ENCODE measurements at regions of chr5 and their contacts with region 1.

Region 1: DNA sequence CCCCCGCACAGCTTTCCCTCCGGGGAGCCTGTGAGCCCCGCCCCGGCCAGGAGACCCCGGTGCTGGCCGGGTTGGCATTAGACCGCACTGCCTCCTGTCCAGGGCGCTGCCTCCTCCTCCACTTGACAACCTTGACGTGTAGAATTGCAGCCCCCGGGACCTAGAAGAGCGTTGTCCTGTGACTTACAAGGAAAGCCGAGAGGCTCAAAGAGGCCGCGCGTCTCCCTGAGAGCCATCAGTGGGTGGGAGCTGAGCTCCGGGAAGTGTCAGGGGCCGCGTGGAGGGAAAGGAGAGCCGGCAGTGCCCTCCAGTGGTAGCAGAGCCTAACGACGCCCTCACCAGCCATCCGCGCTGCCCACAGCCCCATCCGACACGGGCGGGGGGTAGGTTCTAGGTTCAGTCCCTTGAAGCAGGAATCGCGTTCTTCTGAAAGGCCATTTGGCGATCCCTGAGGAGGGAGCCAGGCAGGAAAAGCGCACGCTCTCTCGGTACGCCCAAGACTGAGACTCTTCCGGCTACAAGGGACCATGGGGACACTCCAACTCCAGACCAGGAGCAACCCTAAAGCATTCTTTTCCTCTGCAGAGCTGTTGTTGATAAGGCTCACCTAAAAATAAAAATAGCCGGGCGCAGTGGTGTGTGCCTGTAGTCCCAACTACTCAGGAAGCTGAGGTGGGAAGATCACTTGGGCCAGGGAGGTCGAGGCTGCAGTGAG is 40.6 kb upstream of the SAP30L start:
- DNase-seq: no peak
- H3K4me3 ChIP-seq: peak overlapping the region; percentile 28 to 33
- H3K27ac ChIP-seq: no peak overlapping the region
- H3K4me1 ChIP-seq: peaks cover 9% of the 10 kb centered on the region
- H3K27me3 ChIP-seq: no peaks in the 10 kb centered on the region
- CTCF ChIP-seq: peak; percentile 75 to 86 (median 82)
- POLR2A ChIP-seq: no peak

Region 2: DNA sequence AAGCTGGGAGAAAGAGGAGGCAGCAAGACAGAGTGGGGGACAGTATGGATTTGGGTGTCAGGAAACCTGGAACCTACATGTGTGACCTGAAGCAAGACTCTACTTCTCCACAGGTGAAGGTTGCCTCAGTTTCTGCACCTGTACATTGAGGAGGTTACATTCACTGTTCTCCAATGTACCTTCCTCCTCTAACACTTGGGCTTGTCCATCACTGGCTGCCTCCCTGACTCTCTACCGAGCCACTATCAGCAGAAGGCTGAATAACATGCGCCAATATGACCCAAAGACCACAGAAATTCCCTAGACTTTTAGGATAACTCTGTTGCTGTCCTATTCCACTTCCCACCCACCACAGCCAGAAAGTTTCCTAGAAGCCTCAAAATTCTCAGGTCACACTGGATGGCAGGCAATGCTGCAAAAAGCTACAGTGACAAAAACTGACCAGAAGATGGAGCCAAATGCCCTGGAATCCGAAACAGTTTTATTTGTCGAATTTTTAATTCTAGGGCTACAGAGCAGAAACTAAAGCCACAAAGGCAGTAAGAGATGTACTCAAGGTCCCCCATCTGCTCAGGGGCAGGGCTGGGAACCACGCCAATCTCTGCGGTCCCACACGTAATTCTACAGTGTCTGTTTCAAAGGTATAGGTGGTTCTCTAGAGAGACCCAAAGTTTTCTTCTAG is 431.0 kb before region 1 on chr5:
- intact Hi-C with region 1: loop called (anchors 10 kb)
- DNase-seq: no peak
- H3K4me3 ChIP-seq: no peak overlapping the region
- H3K27ac ChIP-seq: no peak overlapping the region
- H3K4me1 ChIP-seq: no peaks in the 10 kb centered on the region
- H3K27me3 ChIP-seq: no peaks in the 10 kb centered on the region
- CTCF ChIP-seq: peak; percentile 10 to 55 (median 31)
- POLR2A ChIP-seq: no peak

Region 3: DNA sequence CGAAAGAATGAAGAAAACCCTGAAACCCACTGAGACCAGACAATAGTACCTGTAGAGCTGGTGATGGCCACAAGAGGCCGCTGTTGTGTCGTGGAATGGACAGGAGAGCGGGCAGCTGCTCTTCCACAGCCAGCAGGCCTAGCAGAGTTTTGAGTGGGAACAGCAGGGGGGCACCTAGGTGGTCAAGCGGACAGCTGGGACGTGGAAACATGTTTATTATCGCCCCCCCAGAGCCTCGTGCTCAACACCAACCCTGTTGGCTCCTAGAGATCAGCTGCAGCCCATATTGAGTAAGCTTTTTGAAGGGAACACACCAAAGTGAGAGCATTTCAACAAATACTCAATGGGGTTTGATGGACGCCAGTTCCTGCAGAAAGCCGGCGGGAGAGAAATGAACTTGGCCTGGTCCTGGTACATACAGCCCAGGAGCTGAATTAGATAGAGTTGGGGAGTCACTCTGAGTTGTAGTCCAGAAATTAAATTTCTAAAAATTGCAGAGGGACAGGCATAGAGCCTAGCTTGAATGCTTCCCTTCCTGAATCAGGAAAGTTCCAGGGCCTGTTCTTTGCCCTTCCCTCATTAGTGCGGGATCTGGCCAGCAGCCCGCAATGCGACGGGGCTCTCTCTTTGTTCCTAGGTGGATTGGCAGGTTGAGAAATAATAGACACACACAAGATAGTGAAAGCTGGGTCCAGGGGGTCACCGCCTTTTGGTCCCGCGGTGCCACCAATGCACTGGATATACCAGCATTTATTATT is 332.6 kb before region 1 on chr5:
- intact Hi-C with region 1: loop called (anchors 2 kb)
- DNase-seq: no peak
- H3K4me3 ChIP-seq: no peak overlapping the region
- H3K27ac ChIP-seq: no peak overlapping the region
- H3K4me1 ChIP-seq: no peaks in the 10 kb centered on the region
- H3K27me3 ChIP-seq: no peaks in the 10 kb centered on the region
- CTCF ChIP-seq: peak; percentile 85 to 96 (median 93)
- POLR2A ChIP-seq: no peak

Region 4: GRCh38 chr5:154189819-154190594 is 215.2 kb before region 1 on chr5:
- intact Hi-C with region 1: loop called (anchors 10 kb)
- DNase-seq: no peak
- H3K4me3 ChIP-seq: peak overlapping the region; percentile 88
- H3K27ac ChIP-seq: peak overlapping the region; percentile 80
- H3K4me1 ChIP-seq: peaks cover 41% of the 10 kb centered on the region
- H3K27me3 ChIP-seq: no peaks in the 10 kb centered on the region
- CTCF ChIP-seq: peak in 1 of 3 experiments; percentile 40
- POLR2A ChIP-seq: no peak

Measured in vagina (tissue), 2 donors.